Prostate gland (tissue), 2 donors: ENCODE measurements at regions of chr6 and their contacts with region 1.

Region 1: DNA sequence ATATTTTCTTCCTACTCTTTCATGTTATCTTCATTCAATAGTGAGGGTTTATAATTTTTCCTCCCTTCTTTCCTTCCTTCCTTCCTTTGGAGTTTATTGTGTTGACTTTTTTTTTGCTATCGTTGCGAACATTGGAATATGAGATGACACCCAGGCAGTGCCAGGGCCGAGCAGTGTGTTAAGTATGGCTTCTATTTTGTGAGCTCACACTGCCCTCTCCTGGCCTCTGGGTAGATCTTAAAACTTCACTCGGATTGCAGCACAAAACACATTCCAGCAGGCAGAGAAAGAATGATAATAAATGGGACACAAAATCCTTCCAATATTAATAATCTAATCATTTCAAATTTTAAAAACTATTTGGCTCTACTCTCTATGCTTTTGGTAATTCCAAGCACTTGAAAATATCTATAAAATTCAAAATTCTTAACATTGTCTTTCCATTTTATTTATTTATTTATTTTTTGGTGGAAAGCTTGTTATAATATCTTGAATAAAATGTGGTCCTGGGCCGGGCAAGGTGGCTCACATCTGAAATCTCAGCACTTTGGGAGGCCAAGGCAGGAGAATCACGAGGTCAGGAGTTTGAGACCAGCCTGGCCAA is 147.4 kb upstream of the OLIG3 start:
- DNase-seq: peak; percentile 83
- H3K4me3 ChIP-seq: no peak overlapping the region
- H3K27ac ChIP-seq: no peak overlapping the region
- H3K4me1 ChIP-seq: no peaks in the 10 kb centered on the region
- H3K27me3 ChIP-seq: no peaks in the 10 kb centered on the region
- CTCF ChIP-seq: peak in 3 of 4 experiments; percentile 72 to 89 (median 76)
- POLR2A ChIP-seq: no peak

Region 2: DNA sequence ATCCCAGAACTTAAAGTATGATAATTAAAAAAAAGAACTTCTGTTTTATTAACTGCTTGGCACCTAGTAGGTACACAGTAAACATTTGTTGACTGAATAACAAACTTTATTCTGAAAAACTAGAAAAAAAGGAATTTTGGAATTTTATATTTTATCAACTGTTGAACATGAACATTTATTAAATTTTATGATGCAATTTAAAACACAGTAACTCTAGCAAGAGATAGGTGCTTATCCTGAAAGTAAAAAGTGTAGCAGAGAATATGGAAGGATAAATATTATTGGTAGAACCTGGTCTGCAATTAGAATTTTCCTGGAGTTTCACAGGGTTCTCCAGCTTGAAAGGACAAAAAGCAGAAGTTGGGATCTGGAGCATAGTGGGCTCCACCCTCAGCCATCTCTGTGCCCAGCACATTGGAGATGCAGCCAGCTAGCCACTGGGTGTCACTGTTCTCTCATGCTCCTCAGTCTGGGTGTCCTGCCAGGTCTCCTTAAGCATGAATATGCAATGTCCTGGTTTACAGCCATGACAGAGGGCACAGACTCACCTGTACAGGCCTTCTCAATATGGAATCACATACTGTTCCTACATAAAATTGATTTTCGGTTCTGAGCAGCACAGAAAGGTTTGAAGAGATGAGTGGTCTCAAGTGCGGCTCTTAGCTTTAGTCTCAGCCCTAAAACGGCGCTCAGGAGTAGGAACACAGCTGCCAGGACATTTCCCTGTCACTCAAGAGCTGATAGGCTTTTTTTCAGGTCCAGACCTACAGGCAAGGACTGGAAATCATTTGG is 565.1 kb before region 1 on chr6:
- intact Hi-C with region 1: loop called (anchors 5 kb)
- DNase-seq: peak; percentile 85
- H3K4me3 ChIP-seq: no peak overlapping the region
- H3K27ac ChIP-seq: no peak overlapping the region
- H3K4me1 ChIP-seq: no peaks in the 10 kb centered on the region
- H3K27me3 ChIP-seq: no peaks in the 10 kb centered on the region
- CTCF ChIP-seq: peak in 3 of 4 experiments; percentile 57 to 82 (median 73)
- POLR2A ChIP-seq: no peak

Region 3: DNA sequence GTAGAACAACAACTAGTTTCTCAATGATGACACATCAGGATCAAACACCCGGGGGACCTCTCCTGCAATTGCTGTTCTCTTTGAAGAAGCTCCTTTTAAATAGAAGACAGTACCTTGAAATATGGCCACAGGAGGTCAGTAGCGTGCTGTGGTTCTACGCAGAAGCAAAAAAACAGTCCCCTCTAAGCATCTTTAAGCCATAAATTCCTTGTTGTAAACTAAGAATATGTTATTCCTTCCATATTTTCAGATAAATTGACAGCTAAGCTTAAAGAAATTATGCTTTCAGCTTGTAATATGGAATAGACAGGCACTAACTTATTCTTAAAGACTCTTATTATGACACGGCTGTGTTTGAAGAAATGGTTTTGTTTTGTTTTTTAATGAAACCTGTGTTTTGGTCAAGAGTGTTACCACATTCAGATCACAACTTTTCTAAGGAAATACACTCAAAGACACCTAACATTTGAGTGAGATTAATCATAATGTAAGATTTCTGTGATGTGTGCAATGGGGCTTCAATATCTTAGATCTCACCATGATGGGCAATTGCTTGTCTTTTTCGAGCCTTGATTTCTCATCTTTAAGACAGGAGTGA is 547.1 kb before region 1 on chr6:
- intact Hi-C with region 1: loop called (anchors 5 kb)
- DNase-seq: peak; percentile 63
- H3K4me3 ChIP-seq: no peak overlapping the region
- H3K27ac ChIP-seq: no peak overlapping the region
- H3K4me1 ChIP-seq: no peaks in the 10 kb centered on the region
- H3K27me3 ChIP-seq: no peaks in the 10 kb centered on the region
- CTCF ChIP-seq: peak in 3 of 4 experiments; percentile 76 to 80 (median 78)
- POLR2A ChIP-seq: no peak

Region 4: DNA sequence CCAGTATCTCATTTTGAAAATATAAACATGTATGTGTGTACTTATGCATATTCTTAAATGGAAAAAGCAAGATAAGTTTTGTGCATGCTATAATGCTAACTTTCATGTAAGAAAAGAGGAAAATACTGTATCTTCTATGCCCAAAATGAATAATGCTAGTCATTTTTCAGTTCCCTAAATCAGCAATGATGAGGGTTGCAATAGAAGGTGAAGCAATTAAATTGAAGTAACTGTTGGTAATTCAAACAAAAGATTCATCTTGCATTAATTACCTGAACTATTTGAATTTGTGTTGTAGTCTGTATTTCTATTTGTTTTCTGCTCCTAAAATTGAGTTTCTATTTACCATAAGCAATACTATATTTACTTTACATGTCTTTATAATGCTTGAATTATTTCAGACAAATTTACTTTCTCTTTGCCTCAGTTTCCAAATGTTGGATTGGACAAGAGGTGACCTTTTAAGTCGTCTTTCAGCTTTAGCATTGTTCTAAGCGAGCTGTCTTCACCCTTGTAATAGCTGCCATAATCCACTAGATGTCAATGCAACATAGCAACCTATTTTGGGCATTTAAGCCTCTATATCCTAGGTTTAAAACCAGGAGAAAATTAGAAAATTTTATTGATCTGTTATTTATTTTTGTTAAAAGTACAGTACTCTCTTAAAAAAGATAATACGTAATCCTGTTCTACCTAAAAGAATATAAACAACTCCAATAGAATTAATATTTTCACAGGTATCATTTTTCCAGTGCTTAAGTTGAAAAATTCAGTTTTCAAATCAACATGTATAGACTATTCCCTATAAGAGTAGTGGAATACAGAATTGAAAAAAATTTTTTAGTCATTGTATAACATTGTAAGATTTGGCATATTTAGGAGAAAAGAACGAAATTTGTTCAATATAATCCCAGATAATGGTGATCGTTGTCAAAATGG is 370.1 kb before region 1 on chr6:
- intact Hi-C with region 1: loop called (anchors 2 kb)
- DNase-seq: peak; percentile 21
- H3K4me3 ChIP-seq: no peak overlapping the region
- H3K27ac ChIP-seq: no peak overlapping the region
- H3K4me1 ChIP-seq: no peaks in the 10 kb centered on the region
- H3K27me3 ChIP-seq: no peaks in the 10 kb centered on the region
- CTCF ChIP-seq: peak; percentile 70 to 92 (median 81)
- POLR2A ChIP-seq: no peak

Region 5: GRCh38 chr6:137332637-137333280 is 308.8 kb before region 1 on chr6:
- intact Hi-C with region 1: loop called (anchors 10 kb)
- DNase-seq: no peak
- H3K4me3 ChIP-seq: no peak overlapping the region
- H3K27ac ChIP-seq: no peak overlapping the region
- H3K4me1 ChIP-seq: no peaks in the 10 kb centered on the region
- H3K27me3 ChIP-seq: no peaks in the 10 kb centered on the region
- CTCF ChIP-seq: no peak
- POLR2A ChIP-seq: no peak